Naive thymus-derived CD4-positive, alpha-beta T cell (primary cell): ENCODE measurements at regions of chr19 and their contacts with region 1.

Region 1: DNA sequence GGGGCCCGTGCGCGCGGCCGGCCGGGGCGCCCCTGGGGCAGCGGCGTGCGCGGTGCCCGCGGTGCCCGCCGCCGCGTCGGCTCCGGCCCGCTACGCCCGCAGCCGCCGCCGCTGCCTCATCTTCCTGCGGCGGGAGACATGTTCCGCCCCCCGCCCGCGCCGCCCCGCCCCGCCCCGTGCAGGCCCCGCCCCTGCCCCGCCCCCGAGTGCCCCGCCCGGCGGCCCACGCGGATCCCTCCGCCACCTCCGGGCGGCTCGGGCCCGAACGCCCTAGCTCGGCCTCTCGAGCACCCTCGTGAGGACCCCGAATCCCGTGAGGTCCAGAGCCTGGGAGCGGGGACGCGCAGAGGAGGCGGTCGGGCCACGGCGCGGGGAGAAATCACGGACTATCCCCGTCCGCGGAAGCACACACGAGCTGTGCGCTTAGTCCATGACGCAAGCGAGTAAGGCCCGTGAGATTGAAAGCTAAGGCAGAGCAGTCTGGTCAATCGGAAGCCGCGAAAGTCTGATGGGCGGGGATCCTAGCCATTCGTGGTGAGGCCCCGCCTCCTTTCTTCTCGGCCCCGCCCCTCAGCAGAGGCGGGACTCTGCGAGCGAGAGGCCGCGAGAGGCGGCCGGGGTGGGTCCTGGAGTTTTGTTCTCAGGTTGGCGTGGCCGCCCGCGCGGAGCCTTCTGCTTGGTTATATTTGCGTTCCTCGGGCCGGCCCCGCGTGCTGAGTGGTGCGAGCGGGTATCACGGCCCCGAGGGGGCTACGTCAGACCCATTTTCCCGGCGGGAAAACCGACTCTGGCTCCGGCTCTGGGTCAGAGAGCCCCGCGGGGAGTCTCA is at the start of gene TCF3:
- DNase-seq: peak; percentile 96 to 100 (median 99)
- ATAC-seq: peak; percentile 96
- H3K4me3 ChIP-seq: peak within 1 kb of the TSS; percentile 86
- H3K4me3 Mint-ChIP-seq: peak within 1 kb of the TSS; percentile 86 to 96 (median 91)
- H3K27ac ChIP-seq: peak within 1 kb of the TSS; percentile 99
- H3K27ac Mint-ChIP-seq: peak within 1 kb of the TSS; percentile 87 to 98 (median 95)
- H3K4me1 ChIP-seq: peaks cover 4 to 8% of the 10 kb centered on the region in 2 donors
- H3K4me1 Mint-ChIP-seq: peaks cover 7 to 14% (median 10%) of the 10 kb centered on the region in 7 donors
- H3K27me3 ChIP-seq: no peaks in the 10 kb centered on the region
- H3K27me3 Mint-ChIP-seq: peaks cover 0 to 4% (median 0%) of the 10 kb centered on the region in 5 donors
- total RNA-seq, gene TCF3: 66.6 to 83.6 (median 78.3) TPM

Region 2: DNA sequence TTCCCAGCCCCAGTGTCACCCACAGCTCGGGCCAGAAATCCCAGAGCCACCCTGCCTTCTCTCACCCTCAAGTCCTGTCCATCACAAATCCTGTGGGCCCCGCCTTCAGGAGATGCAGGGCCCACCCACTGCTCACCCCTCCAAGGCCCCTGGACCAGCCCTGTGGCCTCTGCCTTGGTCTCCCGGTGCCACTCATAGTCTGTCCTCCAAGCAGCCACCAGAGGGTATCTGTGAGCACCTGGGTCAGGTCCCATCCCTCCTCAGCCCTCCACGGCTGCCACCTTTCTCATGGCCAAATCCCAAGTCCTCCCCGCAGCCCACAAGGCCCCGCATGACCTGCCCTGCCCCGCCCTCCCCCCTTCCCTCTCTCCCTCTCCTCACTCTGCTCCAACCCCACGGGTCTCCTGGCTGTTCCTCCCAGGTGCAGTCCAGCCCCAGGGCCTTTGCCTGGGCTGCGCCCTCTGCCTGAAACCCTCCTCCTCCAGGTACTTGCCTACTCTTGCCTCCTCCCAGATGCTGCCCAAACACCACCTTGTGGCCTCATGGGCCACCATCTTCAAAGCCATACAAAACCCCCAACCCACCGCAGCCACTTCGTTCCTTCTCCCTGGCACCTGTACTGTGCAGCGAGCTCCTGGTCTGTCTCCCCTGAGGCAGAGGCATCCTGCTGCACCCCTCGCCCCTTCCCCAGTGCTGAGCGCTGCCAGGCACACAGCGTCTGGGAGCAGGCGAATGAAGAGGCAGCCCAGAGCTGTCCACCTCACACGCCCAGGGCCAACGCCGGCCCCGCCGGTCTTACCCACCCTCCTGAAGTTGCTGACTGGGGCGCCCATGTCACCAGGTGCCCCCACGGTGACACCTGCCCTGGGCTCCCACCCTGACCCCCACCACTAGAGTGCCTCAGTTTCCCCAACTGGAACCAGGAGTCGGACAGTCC is 34.3 kb before region 1 on chr19:
- CTCF ChIA-PET with region 1: no interaction called
- POLR2A ChIA-PET with region 1: no interaction called
- intact Hi-C with region 1: loop called in 1 of 2 experiments (anchors 1 kb)
- DNase-seq: no peak
- ATAC-seq: peak; percentile 42
- H3K4me3 ChIP-seq: no peak overlapping the region
- H3K4me3 Mint-ChIP-seq: peak overlapping the region in 1 of 10 donors; percentile 21
- H3K27ac ChIP-seq: no peak overlapping the region
- H3K27ac Mint-ChIP-seq: peak overlapping the region in 4 of 9 donors; percentile 38 to 87 (median 50)
- H3K4me1 ChIP-seq: no peaks in the 10 kb centered on the region
- H3K4me1 Mint-ChIP-seq: peaks cover 8 to 22% (median 17%) of the 10 kb centered on the region in 7 donors
- H3K27me3 ChIP-seq: no peaks in the 10 kb centered on the region
- H3K27me3 Mint-ChIP-seq: no peaks in the 10 kb centered on the region

Region 3: GRCh38 chr19:1631557-1632100 is 21.1 kb before region 1 on chr19:
- CTCF ChIA-PET with region 1: no interaction called
- POLR2A ChIA-PET with region 1: no interaction called
- intact Hi-C with region 1: no loop called
- DNase-seq: no peak
- ATAC-seq: no peak
- H3K4me3 ChIP-seq: no peak overlapping the region
- H3K4me3 Mint-ChIP-seq: no peak overlapping the region
- H3K27ac ChIP-seq: no peak overlapping the region
- H3K27ac Mint-ChIP-seq: no peak overlapping the region
- H3K4me1 ChIP-seq: no peaks in the 10 kb centered on the region
- H3K4me1 Mint-ChIP-seq: peaks cover 0 to 10% (median 0%) of the 10 kb centered on the region in 7 donors
- H3K27me3 ChIP-seq: no peaks in the 10 kb centered on the region
- H3K27me3 Mint-ChIP-seq: no peaks in the 10 kb centered on the region